A549 (cell line): ENCODE measurements at regions of chrX and their contacts with region 1.

Region 1: DNA sequence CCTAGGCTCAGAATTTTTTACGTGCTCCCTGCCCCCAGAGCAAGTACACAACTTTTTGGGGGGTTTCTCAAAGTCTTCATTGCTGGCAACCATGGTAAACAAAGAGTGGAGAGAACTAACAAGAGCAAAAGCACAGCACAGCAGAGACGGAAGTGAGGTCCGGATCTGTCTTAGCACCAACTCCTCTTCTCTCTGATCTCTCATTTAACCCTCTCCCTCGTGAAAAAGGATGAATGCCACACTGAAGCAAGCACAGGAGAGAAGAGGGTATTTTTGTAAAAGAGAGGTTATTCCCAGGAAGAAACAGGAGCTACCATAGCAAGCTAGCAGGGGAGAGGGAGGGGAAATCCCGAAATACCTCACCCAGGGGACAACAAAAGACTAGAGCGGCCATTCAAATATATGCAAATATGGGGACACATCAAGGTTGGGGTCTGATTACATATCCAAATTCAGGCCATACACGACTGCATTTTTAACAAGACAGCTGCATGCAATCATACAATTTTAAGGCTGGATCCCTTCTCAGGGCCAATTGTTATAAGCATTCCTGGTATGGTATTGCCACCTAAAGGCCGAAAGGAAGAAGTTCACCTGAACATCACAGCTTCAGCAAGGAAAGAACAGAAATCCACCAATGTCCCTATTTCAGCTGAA is 46.6 kb downstream of the CD40LG start:
- DNase-seq: peak; percentile 21 to 51
- ATAC-seq: peak; percentile 50 to 81; a peak in 3 of 6 replicates
- H3K4me3 ChIP-seq: no peak overlapping the region
- H3K27ac ChIP-seq: no peak overlapping the region
- H3K4me1 ChIP-seq: no peaks in the 10 kb centered on the region
- CTCF ChIP-seq: peak; percentile 66
- EP300 ChIP-seq: no peak
- POLR2A ChIP-seq: no peak
- RAD21 ChIP-seq: peak; percentile 78 to 84

Region 2: DNA sequence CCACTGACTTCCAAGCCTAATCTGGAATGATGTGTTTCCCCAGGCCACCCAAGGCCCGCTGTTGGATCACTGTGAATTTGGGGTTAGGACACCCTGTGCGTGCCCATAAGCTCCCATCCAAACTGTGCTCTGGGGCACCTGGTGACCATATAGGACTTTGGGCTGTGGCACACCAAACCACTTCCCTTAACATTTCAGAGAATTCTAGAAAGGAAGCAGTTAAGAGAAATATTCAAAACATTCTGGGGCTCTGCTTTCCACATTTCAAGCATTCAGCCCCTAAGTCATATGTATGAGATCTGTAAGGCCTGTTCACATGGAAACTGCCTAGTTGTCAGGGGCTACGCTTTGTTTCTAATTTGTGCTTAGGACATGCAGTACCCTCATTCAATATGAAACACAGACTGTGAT is 148.2 kb before region 1 on chrX:
- CTCF ChIA-PET with region 1: no interaction called
- POLR2A ChIA-PET with region 1: no interaction called
- DNase-seq: no peak
- ATAC-seq: no peak
- H3K4me3 ChIP-seq: no peak overlapping the region
- H3K27ac ChIP-seq: no peak overlapping the region
- H3K4me1 ChIP-seq: no peaks in the 10 kb centered on the region
- CTCF ChIP-seq: no peak
- EP300 ChIP-seq: no peak
- POLR2A ChIP-seq: no peak
- RAD21 ChIP-seq: no peak

Region 3: GRCh38 chrX:136608295-136609171 is 86.0 kb before region 1 on chrX:
- CTCF ChIA-PET with region 1: interaction called, 18 read pairs
- POLR2A ChIA-PET with region 1: no interaction called
- DNase-seq: peak in 1 of 2 experiments; percentile 32
- ATAC-seq: peak in 1 of 2 experiments; percentile 62; a peak in 2 of 6 replicates
- H3K4me3 ChIP-seq: no peak overlapping the region
- H3K27ac ChIP-seq: no peak overlapping the region
- H3K4me1 ChIP-seq: no peaks in the 10 kb centered on the region
- CTCF ChIP-seq: peak; percentile 14; the same call in 1 of the 3 replicates
- EP300 ChIP-seq: no peak
- POLR2A ChIP-seq: no peak
- RAD21 ChIP-seq: peak in 1 of 2 experiments; percentile 27; a peak in 1 of 5 replicates

Region 4: GRCh38 chrX:136718091-136718490 is 23.5 kb after region 1 on chrX:
- CTCF ChIA-PET with region 1: no interaction called
- POLR2A ChIA-PET with region 1: no interaction called
- DNase-seq: no peak
- ATAC-seq: no peak
- H3K4me3 ChIP-seq: no peak overlapping the region
- H3K27ac ChIP-seq: no peak overlapping the region
- H3K4me1 ChIP-seq: no peaks in the 10 kb centered on the region
- CTCF ChIP-seq: no peak
- EP300 ChIP-seq: no peak
- POLR2A ChIP-seq: no peak
- RAD21 ChIP-seq: no peak

Region 5: DNA sequence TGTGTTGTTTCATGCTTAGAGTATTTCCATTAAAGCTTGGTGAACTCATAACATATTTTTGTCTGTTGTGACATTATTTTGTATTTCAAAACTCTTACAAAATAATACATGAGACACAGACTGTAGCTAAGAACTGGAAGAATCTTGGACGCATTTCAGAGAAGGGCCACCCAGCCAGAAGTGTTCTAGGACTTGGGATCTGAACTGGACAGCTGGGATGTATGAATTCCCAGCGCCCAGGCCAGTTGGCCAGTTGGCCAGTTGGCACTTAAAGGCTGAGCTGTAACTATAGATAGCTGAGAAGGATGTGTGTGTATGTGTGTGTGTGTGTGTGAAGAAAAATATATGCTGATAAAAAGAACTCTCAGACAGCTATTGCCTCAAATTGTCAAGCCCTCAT is 532.6 kb after region 1 on chrX:
- CTCF ChIA-PET with region 1: no interaction called
- POLR2A ChIA-PET with region 1: no interaction called
- DNase-seq: no peak
- ATAC-seq: no peak
- H3K4me3 ChIP-seq: no peak overlapping the region
- H3K27ac ChIP-seq: no peak overlapping the region
- H3K4me1 ChIP-seq: no peaks in the 10 kb centered on the region
- CTCF ChIP-seq: no peak
- EP300 ChIP-seq: no peak
- POLR2A ChIP-seq: no peak
- RAD21 ChIP-seq: no peak